GM12878 (cell line): ENCODE measurements at regions of chr19 and their contacts with region 1.

Region 1: GRCh38 chr19:12139885-12140547 is at the start of gene ZNF20:
- DNase-seq: peak; percentile 67
- ATAC-seq: peak; percentile 99
- H3K4me3 ChIP-seq: peak within 1 kb of the TSS; percentile 96
- H3K27ac ChIP-seq: peak within 1 kb of the TSS; percentile 85
- H3K4me1 ChIP-seq: peaks cover 3% of the 10 kb centered on the region
- H3K27me3 ChIP-seq: no peaks in the 10 kb centered on the region
- CTCF ChIP-seq: no peak
- EP300 ChIP-seq: no peak
- POLR2A ChIP-seq: peak; percentile 54; the same call in 1 of the 2 replicates
- RAD21 ChIP-seq: no peak
- polyA plus RNA-seq, gene ZNF20: 2.5 to 2.8 TPM

Region 2: DNA sequence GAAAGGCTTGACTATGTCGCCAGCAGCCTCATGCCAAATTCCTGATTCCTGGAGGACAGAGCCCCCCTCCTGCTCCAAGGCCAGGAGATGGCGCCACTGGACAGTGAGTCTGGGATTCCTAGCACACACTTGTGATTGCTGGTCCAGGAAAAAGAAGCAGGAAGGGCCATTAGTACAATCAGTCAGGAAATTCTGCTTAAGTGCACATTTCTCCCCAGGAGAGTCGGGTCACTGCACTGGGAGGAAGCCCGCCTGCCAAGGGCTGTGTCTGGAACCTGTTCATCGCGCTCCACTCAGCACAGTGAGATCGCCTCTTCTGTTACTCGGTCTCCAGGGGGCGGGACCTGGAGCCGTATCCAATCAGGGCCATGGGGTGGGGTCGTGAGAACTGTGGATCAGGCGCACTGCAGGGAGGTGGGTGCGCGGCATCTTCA is 466.4 kb before region 1 on chr19:
- CTCF ChIA-PET with region 1: no interaction called
- POLR2A ChIA-PET with region 1: no interaction called
- RAD21 ChIA-PET with region 1: no interaction called
- SMC1A ChIA-PET with region 1: no interaction called
- in situ Hi-C with region 1: no loop called
- intact Hi-C with region 1: no loop called
- DNase-seq: no peak
- ATAC-seq: no peak
- H3K4me3 ChIP-seq: no peak overlapping the region
- H3K27ac ChIP-seq: no peak overlapping the region
- H3K4me1 ChIP-seq: no peaks in the 10 kb centered on the region
- H3K27me3 ChIP-seq: no peaks in the 10 kb centered on the region
- CTCF ChIP-seq: peak; percentile 24 to 39 (median 34); a peak in 4 of 6 replicates
- EP300 ChIP-seq: no peak
- POLR2A ChIP-seq: no peak
- RAD21 ChIP-seq: no peak

Region 3: DNA sequence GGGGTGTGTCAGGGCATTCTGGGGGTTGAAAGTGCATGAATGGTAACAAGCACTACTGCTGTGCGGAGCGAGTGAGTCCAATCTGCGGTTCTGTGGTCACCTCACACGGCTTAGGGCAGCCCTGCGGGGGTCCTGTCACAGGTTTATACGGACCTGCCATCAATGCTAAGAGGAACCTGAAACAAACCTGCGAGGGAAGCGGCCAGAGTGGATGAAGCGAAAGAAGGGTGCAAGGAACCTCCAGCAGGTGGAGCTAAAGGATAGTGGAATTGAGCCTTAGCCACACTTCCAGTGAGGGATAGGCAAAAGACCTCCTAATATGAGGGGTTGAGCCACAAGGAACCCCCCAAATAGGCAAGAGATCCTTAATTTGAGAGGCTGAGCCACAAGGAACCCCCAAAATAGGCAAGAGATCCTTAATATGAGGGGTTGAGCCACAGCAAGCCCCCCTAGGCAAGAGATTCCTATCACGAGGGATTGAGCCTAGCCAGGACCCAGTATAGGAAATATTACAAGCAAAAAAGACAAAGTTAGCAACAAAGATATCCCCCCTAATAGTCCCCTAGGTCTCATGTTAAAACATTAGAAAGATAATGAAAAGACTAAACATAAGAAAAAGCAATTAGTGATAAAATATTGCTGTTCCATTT is 258.7 kb before region 1 on chr19:
- CTCF ChIA-PET with region 1: interaction called, 9 read pairs
- POLR2A ChIA-PET with region 1: no interaction called
- RAD21 ChIA-PET with region 1: interaction called, 6 read pairs
- SMC1A ChIA-PET with region 1: no interaction called
- in situ Hi-C with region 1: no loop called
- intact Hi-C with region 1: loop called (anchors 1 kb)
- DNase-seq: peak; percentile 17
- ATAC-seq: peak; percentile 48; the same call in 2 of the 3 replicates
- H3K4me3 ChIP-seq: no peak overlapping the region
- H3K27ac ChIP-seq: no peak overlapping the region
- H3K4me1 ChIP-seq: no peaks in the 10 kb centered on the region
- H3K27me3 ChIP-seq: no peaks in the 10 kb centered on the region
- CTCF ChIP-seq: peak; percentile 49 to 68 (median 58)
- EP300 ChIP-seq: no peak
- POLR2A ChIP-seq: no peak
- RAD21 ChIP-seq: peak; percentile 45

Region 4: DNA sequence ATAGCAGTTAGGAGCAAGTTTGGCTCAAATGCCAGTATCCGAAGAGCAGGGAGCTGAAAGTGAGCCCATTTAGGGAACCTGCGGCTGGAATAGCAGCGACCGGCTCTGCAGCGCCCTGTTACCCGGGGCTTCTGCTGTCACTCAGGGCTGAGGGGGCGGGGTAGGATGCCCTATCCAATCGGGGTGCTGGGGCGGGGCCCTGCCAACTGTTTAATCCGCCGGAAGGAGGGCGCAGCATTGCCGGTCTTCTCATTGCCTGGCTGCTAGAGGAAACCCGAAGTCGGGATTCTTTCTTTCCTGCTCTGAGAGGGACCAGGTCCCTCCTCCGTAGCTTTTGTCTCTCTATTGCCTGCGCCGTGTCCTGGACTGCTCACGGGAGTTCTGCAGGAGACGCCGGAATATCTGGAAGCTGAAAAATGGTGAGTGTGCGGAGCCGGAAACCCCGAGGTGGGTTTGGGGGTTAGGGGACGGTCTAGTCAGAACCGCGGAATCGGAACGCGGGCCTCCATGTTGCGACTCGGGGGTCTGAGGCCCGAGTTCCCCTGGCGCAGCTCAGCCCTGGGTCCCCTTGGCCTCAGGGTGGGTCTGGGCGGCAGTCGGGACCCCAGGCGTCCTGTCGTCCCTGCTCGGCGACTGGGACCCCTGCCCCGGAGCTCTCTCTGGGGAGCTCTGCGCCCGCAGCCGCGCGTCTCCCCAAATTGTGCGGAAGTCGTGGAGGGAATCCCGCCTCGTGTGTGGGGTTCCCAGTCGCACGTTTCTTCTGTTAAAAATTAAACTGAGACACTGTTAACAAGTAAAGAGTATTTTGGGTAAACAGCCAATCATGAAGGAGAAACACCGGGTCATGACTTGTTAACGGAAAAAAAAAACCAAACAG is 152.4 kb before region 1 on chr19:
- CTCF ChIA-PET with region 1: interaction called, 10 read pairs
- POLR2A ChIA-PET with region 1: no interaction called
- RAD21 ChIA-PET with region 1: interaction called, 22 read pairs
- SMC1A ChIA-PET with region 1: interaction called, 13 read pairs
- in situ Hi-C with region 1: no loop called
- intact Hi-C with region 1: no loop called
- DNase-seq: peak; percentile 68
- ATAC-seq: peak; percentile 99
- H3K4me3 ChIP-seq: peak overlapping the region; percentile 96
- H3K27ac ChIP-seq: peak overlapping the region; percentile 82
- H3K4me1 ChIP-seq: no peaks in the 10 kb centered on the region
- H3K27me3 ChIP-seq: no peaks in the 10 kb centered on the region
- CTCF ChIP-seq: no peak
- EP300 ChIP-seq: 0 out of 4 replicates have a peak, but pooled peaks of 1 of the 2 experiments have one; percentile 8
- POLR2A ChIP-seq: peak; percentile 81
- RAD21 ChIP-seq: no peak

Region 5: GRCh38 chr19:12064590-12065538 is 75.2 kb before region 1 on chr19 and contains the start of gene ZNF844:
- CTCF ChIA-PET with region 1: interaction called, 32 read pairs
- POLR2A ChIA-PET with region 1: interaction called, 3 read pairs
- RAD21 ChIA-PET with region 1: interaction called, 29 read pairs
- SMC1A ChIA-PET with region 1: interaction called, 27 read pairs
- in situ Hi-C with region 1: no loop called
- intact Hi-C with region 1: no loop called
- DNase-seq: peak; percentile 48
- ATAC-seq: peak; percentile 20; the same call in 1 of the 3 replicates
- H3K4me3 ChIP-seq: peak within 1 kb of the TSS; percentile 64
- H3K27ac ChIP-seq: peak within 1 kb of the TSS; percentile 86
- H3K4me1 ChIP-seq: no peaks in the 10 kb centered on the region
- H3K27me3 ChIP-seq: no peaks in the 10 kb centered on the region
- CTCF ChIP-seq: no peak
- EP300 ChIP-seq: no peak
- POLR2A ChIP-seq: peak; percentile 97
- RAD21 ChIP-seq: no peak
- polyA plus RNA-seq, gene ZNF844: 0.16 to 0.26 TPM

Region 6: DNA sequence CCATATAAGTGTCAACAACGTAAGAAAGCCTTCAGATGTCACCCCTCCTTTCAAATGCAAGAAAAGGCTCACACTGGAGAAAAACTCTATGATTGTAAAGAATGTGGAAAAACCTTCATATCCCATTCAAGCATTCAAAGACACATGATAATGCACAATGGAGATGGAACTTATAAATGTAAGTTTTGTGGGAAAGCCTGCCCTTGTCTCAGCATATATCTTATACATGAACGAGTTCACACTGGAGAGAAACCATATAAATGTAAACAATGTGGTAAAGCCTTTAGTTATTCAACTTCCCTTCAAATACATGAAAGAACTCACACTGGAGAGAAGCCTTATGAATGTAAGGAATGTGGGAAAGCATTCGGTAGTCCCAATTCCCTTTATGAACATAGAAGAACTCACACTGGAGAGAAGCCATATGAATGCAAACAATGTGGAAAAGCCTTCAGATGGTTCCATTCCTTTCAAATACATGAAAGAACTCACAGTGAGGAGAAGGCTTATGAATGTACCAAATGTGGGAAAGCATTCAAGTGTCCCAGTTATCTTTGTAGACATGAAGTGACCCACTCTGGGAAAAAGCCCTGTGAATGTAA is 64.4 kb before region 1 on chr19:
- CTCF ChIA-PET with region 1: no interaction called
- POLR2A ChIA-PET with region 1: no interaction called
- RAD21 ChIA-PET with region 1: no interaction called
- SMC1A ChIA-PET with region 1: no interaction called
- in situ Hi-C with region 1: no loop called
- intact Hi-C with region 1: no loop called
- DNase-seq: no peak
- ATAC-seq: no peak
- H3K4me3 ChIP-seq: no peak overlapping the region
- H3K27ac ChIP-seq: no peak overlapping the region
- H3K4me1 ChIP-seq: no peaks in the 10 kb centered on the region
- H3K27me3 ChIP-seq: no peaks in the 10 kb centered on the region
- CTCF ChIP-seq: no peak
- EP300 ChIP-seq: no peak
- POLR2A ChIP-seq: no peak
- RAD21 ChIP-seq: no peak